Activated CD8-positive, alpha-beta memory T cell treated with anti-CD3 and anti-CD28 coated beads, Interleukin-2, amount 10 ng/mL, durations not matched to agents 7 days and 5 days (primary cell): ENCODE measurements at regions of chr5 and their contacts with region 1.

Region 1: GRCh38 chr5:79857714-79858409 is 133.2 kb downstream of the MTX3 start:
- DNase-seq: peak; percentile 84
- ATAC-seq: peak; percentile 66
- H3K4me3 Mint-ChIP-seq: no peak overlapping the region
- H3K27ac Mint-ChIP-seq: no peak overlapping the region
- H3K4me1 Mint-ChIP-seq: peaks cover 3% of the 10 kb centered on the region
- H3K27me3 Mint-ChIP-seq: peaks cover 38% of the 10 kb centered on the region

Region 2: DNA sequence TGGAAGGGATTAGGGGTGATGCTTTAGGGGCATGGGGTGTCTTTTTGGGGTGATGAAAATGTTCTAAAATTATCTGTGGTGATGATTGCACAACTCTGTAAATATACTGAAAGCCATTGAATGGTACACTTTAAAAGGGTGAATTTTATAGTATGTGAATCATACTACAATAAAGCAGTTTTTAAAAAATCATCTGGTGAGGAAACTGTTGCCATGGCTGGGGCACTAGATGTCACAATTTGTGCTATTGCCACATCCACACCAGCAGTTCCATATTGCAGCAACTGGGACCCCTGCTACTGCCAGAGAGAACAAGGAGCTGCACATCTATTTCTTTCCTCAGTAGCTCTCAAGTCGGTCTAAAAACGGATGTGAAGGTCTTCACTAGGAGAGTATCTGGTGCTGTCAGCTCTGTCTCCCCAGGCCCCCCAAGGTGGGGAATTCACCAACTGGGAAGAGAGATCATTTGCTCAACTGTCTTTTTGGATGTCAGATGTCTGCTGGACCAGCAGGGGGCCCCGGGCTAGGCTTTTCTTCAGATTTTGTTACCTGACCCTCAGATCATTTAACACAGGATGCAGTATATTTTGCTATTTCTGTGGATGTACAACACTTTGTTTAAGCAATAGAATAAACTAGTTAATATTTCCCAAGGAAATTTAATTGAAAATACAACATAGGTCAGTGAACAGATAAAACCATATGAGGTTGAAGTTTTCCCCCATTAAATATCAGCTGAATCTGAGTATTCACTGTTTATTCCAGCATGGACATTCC is 155.1 kb before region 1 on chr5:
- CTCF ChIA-PET with region 1: interaction called, 13 read pairs
- DNase-seq: peak; percentile 51
- ATAC-seq: no peak
- H3K4me3 Mint-ChIP-seq: no peak overlapping the region
- H3K27ac Mint-ChIP-seq: no peak overlapping the region
- H3K4me1 Mint-ChIP-seq: peaks cover 18% of the 10 kb centered on the region
- H3K27me3 Mint-ChIP-seq: no peaks in the 10 kb centered on the region

Region 3: DNA sequence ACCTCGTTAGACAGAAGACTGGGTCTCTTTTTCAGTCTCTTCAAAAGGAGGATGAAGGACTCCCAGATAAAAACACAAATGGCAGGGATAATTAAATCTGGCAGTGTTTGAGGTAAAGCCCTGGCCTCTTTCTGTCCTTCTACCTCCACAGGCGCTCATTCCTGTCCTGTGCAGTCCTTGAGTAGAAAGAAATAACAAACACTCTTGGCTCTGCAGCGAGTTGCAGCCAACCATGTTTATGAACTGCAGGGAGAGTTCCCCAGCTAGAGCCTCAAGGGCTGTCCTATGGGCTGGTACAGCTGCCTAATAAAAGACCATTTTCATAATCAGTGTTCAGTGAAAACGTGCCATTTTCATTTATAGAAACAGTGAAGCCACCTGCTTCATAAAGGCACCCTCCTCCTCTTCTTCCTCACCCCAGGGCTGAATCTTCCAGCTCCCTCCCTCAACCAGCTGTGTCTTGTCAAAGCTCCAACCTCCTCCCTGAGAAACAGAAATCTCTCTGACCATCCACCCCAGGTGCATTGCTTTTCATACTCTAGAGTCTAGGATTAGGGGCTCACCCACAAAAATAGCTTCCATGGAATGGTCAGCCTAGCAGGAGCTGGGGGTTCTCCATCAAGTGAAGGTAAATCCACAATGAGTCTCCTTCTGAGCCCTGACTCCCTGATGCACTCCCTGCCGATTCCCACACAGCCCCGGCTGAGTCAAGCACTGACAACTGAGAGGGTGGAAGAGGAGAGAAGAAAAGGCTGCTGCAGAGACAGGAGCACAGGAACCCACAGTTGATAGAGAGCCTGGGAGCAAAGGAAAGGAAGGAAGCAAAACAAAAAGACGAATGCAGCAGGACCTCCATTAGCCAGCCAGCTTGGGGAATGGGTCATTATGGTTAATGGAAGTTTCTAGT is 17.5 kb before region 1 on chr5:
- CTCF ChIA-PET with region 1: interaction called, 14 read pairs
- DNase-seq: no peak
- ATAC-seq: no peak
- H3K4me3 Mint-ChIP-seq: no peak overlapping the region
- H3K27ac Mint-ChIP-seq: no peak overlapping the region
- H3K4me1 Mint-ChIP-seq: peaks cover 10% of the 10 kb centered on the region
- H3K27me3 Mint-ChIP-seq: peaks cover 22% of the 10 kb centered on the region

Region 4: GRCh38 chr5:79947567-79947966 is 89.7 kb after region 1 on chr5:
- CTCF ChIA-PET with region 1: no interaction called
- DNase-seq: no peak
- ATAC-seq: no peak
- H3K4me3 Mint-ChIP-seq: no peak overlapping the region
- H3K27ac Mint-ChIP-seq: no peak overlapping the region
- H3K4me1 Mint-ChIP-seq: peaks cover 5% of the 10 kb centered on the region
- H3K27me3 Mint-ChIP-seq: no peaks in the 10 kb centered on the region

Region 5: GRCh38 chr5:79957741-79958140 is 99.9 kb after region 1 on chr5:
- CTCF ChIA-PET with region 1: no interaction called
- DNase-seq: no peak
- ATAC-seq: no peak
- H3K4me3 Mint-ChIP-seq: no peak overlapping the region
- H3K27ac Mint-ChIP-seq: no peak overlapping the region
- H3K4me1 Mint-ChIP-seq: peaks cover 12% of the 10 kb centered on the region
- H3K27me3 Mint-ChIP-seq: no peaks in the 10 kb centered on the region

Region 6: GRCh38 chr5:80679650-80680049 is 821.8 kb after region 1 on chr5:
- CTCF ChIA-PET with region 1: no interaction called
- DNase-seq: no peak
- ATAC-seq: no peak
- H3K4me3 Mint-ChIP-seq: no peak overlapping the region
- H3K27ac Mint-ChIP-seq: no peak overlapping the region
- H3K4me1 Mint-ChIP-seq: no peaks in the 10 kb centered on the region
- H3K27me3 Mint-ChIP-seq: no peaks in the 10 kb centered on the region